Vagina (tissue), 2 donors: ENCODE measurements at regions of chr4 and their contacts with region 1.

Region 1: GRCh38 chr4:2262143-2262943 is 434 bp upstream of the MXD4 start:
- DNase-seq: peak in 1 of 2 donors; percentile 100
- H3K4me3 ChIP-seq: peak overlapping the region; percentile 61 to 93
- H3K27ac ChIP-seq: peak overlapping the region; percentile 93
- H3K4me1 ChIP-seq: peaks cover 57% of the 10 kb centered on the region
- H3K27me3 ChIP-seq: no peaks in the 10 kb centered on the region
- CTCF ChIP-seq: no peak
- POLR2A ChIP-seq: peak in 1 of 2 donors; percentile 93

Region 2: GRCh38 chr4:2418650-2419571 is 156.6 kb after region 1 on chr4 and contains the start of gene CFAP99:
- intact Hi-C with region 1: loop called (anchors 10 kb)
- DNase-seq: peak in 1 of 2 donors; percentile 93
- H3K4me3 ChIP-seq: peak within 1 kb of the TSS; percentile 54 to 85
- H3K27ac ChIP-seq: peak within 1 kb of the TSS; percentile 44
- H3K4me1 ChIP-seq: peaks cover 41% of the 10 kb centered on the region
- H3K27me3 ChIP-seq: no peaks in the 10 kb centered on the region
- CTCF ChIP-seq: no peak
- POLR2A ChIP-seq: no peak
- total RNA-seq, gene CFAP99: not detected

Region 3: GRCh38 chr4:2468445-2469192 is 206.3 kb after region 1 on chr4 and contains the start of gene RNF4:
- intact Hi-C with region 1: loop called (anchors 1 kb)
- DNase-seq: peak in 1 of 2 donors; percentile 97
- H3K4me3 ChIP-seq: peak within 1 kb of the TSS; percentile 53 to 81
- H3K27ac ChIP-seq: peak within 1 kb of the TSS; percentile 86
- H3K4me1 ChIP-seq: peaks cover 34% of the 10 kb centered on the region
- H3K27me3 ChIP-seq: no peaks in the 10 kb centered on the region
- CTCF ChIP-seq: no peak
- POLR2A ChIP-seq: peak in 1 of 2 donors; percentile 15
- total RNA-seq, gene RNF4: 30.2 TPM

Region 4: GRCh38 chr4:2536193-2537010 is 274.1 kb after region 1 on chr4 and contains the start of gene FAM193A:
- intact Hi-C with region 1: loop called (anchors 5 kb)
- DNase-seq: peak; percentile 99
- H3K4me3 ChIP-seq: peak within 1 kb of the TSS; percentile 83 to 91
- H3K27ac ChIP-seq: peak within 1 kb of the TSS; percentile 92
- H3K4me1 ChIP-seq: peaks cover 47% of the 10 kb centered on the region
- H3K27me3 ChIP-seq: no peaks in the 10 kb centered on the region
- CTCF ChIP-seq: no peak
- POLR2A ChIP-seq: peak in 1 of 2 donors; percentile 51
- total RNA-seq, gene FAM193A: 31.4 TPM

Region 5: DNA sequence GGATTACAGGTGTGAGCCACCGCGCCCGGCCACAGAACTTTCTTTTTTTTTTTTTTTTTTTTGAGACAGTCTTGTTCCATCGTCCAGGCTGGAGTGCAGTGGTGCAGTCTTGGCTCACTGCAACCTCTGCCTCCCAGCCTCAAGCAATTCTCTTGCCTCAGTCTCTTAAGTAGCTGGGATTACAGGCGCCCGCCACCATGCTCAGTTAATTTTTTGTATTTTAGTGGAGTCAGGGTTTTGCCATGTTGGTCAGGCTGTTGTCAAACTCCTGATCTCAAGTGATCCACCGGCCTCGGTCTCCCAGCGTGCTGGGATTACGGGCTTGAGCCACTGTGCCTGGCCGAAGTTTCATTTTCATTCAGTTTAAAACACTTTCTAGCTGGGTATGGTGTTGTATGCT is 290.5 kb after region 1 on chr4:
- intact Hi-C with region 1: no loop called
- DNase-seq: peak in 1 of 2 donors; percentile 7
- H3K4me3 ChIP-seq: no peak overlapping the region
- H3K27ac ChIP-seq: no peak overlapping the region
- H3K4me1 ChIP-seq: peaks cover 29% of the 10 kb centered on the region
- H3K27me3 ChIP-seq: no peaks in the 10 kb centered on the region
- CTCF ChIP-seq: no peak
- POLR2A ChIP-seq: no peak